ENCODE measurements at regions of chr3 and their contacts with region 1.

Region 1: DNA sequence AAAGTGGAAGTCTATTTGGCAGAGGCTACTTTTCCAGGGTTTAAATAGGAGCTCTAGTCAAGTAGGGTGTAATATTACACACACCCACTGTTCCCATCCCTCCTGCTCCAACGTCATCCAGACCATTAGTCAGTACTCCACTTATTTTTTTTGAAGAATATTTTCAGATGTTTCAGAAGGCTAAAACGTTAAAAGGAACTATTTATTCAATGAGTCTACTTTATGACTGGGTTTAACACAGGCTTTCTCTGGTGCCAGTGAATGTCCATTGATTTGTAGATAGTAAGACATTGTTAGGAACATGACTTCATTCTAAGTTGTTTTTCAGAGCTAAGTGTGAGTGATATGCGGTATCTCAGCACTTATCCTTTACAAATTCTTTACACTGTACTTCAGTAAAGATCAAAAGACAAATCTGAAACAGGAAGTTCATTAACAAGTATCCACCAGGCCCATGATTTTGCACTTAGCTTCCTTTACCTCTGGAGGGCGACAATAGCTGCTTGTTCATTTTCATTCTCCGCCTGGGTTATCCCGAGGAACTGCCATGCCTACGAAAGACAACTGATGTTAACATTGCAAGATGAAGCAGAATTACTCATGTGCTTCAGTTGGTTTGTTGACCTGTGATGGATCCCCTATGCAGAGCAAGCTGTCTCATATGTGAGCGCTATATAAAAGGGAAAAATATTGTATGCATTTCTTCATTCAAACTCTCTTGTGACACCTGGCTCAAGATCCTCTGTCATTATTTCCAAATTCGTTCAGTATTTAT is 158.7 kb downstream of the USP13 start:
- DNase-seq: peak; percentile 78
- H3K4me3 ChIP-seq: no peak overlapping the region
- H3K27ac ChIP-seq: no peak overlapping the region
- H3K4me1 ChIP-seq: no peaks in the 10 kb centered on the region
- H3K27me3 ChIP-seq: no peaks in the 10 kb centered on the region
- CTCF ChIP-seq: peak; percentile 86

Region 2: GRCh38 chr3:179613807-179614206 is 197.7 kb before region 1 on chr3:
- CTCF ChIA-PET with region 1: no interaction called
- POLR2A ChIA-PET with region 1: no interaction called
- intact Hi-C with region 1: no loop called
- DNase-seq: no peak
- H3K4me3 ChIP-seq: no peak overlapping the region
- H3K27ac ChIP-seq: peak overlapping the region; percentile 9
- H3K4me1 ChIP-seq: no peaks in the 10 kb centered on the region
- H3K27me3 ChIP-seq: no peaks in the 10 kb centered on the region
- CTCF ChIP-seq: no peak

Region 3: DNA sequence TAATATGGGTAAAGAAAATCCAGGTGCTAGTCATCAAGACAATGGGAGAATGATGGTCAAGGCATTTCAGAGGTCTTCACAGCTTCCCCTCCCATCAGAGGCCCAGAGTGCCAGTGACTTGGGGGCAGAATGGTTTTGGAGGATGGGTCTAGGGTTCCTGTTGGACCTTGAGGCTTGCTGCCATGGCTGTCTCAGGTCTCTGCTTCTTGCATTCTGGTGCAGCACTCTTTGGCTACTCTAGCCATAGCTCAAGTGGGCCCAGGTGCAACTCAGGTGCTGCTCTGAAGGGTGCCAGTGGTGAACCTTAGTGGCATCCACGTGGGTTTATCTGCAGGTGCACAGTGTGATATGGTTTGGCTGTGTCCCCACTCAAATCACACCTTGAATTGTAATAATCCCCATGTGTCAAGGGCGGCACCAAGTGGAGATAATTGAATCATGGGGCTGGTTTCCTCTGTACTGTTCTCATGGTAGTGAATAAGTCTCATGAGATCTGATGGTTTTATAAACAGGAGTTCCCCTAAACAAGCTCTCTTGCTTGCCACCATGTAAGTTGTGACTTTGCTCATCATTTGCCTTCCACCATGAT is 273.7 kb after region 1 on chr3:
- CTCF ChIA-PET with region 1: no interaction called
- POLR2A ChIA-PET with region 1: no interaction called
- intact Hi-C with region 1: loop called (anchors 10 kb)
- DNase-seq: no peak
- H3K4me3 ChIP-seq: no peak overlapping the region
- H3K27ac ChIP-seq: no peak overlapping the region
- H3K4me1 ChIP-seq: no peaks in the 10 kb centered on the region
- H3K27me3 ChIP-seq: peaks cover 3% of the 10 kb centered on the region
- CTCF ChIP-seq: no peak

Region 4: GRCh38 chr3:180594631-180595558 is 783.4 kb after region 1 on chr3:
- CTCF ChIA-PET with region 1: no interaction called
- POLR2A ChIA-PET with region 1: no interaction called
- intact Hi-C with region 1: loop called (anchors 5 kb)
- DNase-seq: peak; percentile 36
- H3K4me3 ChIP-seq: no peak overlapping the region
- H3K27ac ChIP-seq: no peak overlapping the region
- H3K4me1 ChIP-seq: no peaks in the 10 kb centered on the region
- H3K27me3 ChIP-seq: no peaks in the 10 kb centered on the region
- CTCF ChIP-seq: peak; percentile 56